Activated naive CD4-positive, alpha-beta T cell treated with anti-CD3 and anti-CD28 coated beads for 36 hours (primary cell): ENCODE measurements at regions of chr21 and their contacts with region 1.

Region 1: GRCh38 chr21:44911389-44912157 is 9.1 kb downstream of the ITGB2 start:
- DNase-seq: peak; percentile 70
- H3K4me3 Mint-ChIP-seq: peak overlapping the region; percentile 57
- H3K27ac Mint-ChIP-seq: peak overlapping the region; percentile 93
- H3K4me1 Mint-ChIP-seq: peaks cover 78% of the 10 kb centered on the region
- H3K27me3 Mint-ChIP-seq: no peaks in the 10 kb centered on the region

Region 2: DNA sequence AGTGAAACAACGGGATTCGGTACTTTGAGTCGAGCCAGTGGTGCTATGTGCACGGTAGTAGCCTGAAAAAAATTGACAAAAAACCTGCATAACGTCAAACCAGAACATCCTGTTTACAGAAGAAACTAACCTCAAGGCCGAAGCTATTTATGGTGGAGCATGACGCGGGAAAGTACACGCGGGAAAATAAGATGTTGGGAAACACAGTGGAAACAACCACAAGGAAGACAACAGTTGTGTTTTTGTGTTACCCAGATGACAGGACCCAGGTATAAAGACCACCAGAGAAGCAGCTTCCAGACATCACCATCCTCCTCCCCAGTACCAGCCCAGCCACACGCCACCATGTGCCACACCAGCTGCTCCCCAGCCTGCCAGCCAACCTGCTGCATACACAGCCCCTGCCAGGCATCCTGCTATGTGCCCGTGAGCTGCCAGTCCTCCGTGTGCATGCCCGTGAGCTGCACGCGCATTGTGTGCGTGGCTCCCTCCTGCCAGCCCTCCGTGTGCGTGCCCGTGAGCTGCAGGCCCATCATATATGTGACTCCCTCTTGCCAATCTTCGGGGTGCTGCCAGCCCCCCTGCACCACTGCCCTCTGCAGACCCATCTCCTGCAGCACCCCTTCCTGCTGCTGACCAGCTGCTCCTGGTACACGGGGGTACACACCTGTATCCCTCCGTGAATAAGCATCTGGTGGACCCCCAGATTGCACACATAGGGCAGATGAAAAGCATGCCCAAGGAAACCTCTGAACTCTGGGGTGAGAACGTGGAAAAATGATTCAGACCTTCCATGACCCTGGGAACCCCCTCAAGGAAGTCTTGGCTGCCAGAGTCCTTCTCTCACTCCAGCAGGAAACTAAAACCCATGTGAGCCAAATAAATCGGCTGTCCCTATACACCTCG is 253.7 kb before region 1 on chr21 and contains the start of gene KRTAP12-3:
- CTCF ChIA-PET with region 1: no interaction called
- intact Hi-C with region 1: loop called (anchors 1 kb)
- DNase-seq: peak; percentile 45
- H3K4me3 Mint-ChIP-seq: peak within 1 kb of the TSS; percentile 48
- H3K27ac Mint-ChIP-seq: peak within 1 kb of the TSS; percentile 76
- H3K4me1 Mint-ChIP-seq: peaks cover 49% of the 10 kb centered on the region
- H3K27me3 Mint-ChIP-seq: no peaks in the 10 kb centered on the region
- total RNA-seq, gene KRTAP12-3: not detected